ENCODE measurements at regions of chr7 and their contacts with region 1.

Region 1: DNA sequence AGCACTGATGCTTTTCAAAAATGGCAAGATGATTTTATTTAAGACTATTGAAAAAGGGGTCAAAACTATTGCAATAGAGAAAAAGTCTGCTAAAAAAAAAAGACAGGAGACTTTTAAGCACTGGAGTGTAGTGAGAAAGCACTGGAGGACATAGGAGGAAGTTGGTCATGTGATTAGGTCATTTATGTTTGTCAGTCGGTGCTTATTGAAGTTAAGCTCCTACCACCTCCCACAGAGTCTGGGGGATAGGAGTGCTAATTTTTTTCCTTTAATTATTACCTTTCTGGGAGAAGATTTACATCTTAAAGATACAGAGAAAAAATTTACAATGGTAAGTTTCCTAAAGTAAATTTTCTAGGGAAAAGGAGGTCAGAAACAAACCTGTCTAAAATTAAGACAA is 80.2 kb upstream of the TMEM229A start:
- DNase-seq: no peak
- ATAC-seq: no peak
- H3K4me3 ChIP-seq: no peak overlapping the region
- H3K27ac ChIP-seq: no peak overlapping the region
- H3K4me1 ChIP-seq: no peaks in the 10 kb centered on the region
- H3K27me3 ChIP-seq: no peaks in the 10 kb centered on the region
- CTCF ChIP-seq: no peak

Region 2: DNA sequence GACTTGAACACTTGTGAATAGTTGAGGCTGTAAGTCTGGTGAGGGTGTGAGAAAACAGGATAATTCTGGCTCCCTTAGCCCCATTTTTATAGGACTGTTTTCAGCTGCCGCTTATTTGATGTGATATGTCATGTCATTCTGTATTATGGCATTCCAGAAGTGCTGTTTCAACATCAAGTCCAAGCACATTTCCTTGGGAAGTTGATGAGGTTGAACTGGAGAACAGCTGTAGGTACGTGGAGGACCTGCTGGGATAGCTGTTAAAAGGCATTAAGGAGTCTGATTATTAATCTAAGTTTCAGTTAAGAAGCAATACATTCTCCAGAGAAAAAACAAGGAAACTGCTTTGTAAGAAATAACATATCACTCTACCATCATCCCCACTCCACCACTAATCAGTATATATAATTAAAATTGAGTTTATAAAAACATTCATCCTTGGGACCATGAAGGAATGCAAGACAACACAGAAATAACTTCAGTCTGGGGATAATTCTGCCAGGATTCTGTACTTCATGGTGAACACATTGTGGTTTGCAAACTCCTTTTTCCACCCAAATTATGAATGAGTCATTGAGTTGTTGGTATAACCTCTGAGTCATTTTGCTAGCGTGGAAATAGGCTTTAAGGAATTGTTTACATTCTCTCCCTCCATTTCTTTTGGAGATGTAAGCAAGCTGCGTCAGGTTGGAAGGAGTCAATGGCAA is 40.3 kb before region 1 on chr7:
- intact Hi-C with region 1: no loop called
- DNase-seq: no peak
- ATAC-seq: no peak
- H3K4me3 ChIP-seq: no peak overlapping the region
- H3K27ac ChIP-seq: no peak overlapping the region
- H3K4me1 ChIP-seq: no peaks in the 10 kb centered on the region
- H3K27me3 ChIP-seq: no peaks in the 10 kb centered on the region
- CTCF ChIP-seq: no peak

Region 3: GRCh38 chr7:124085179-124085578 is 27.9 kb before region 1 on chr7:
- intact Hi-C with region 1: no loop called
- DNase-seq: no peak
- ATAC-seq: no peak
- H3K4me3 ChIP-seq: no peak overlapping the region
- H3K27ac ChIP-seq: no peak overlapping the region
- H3K4me1 ChIP-seq: peaks cover 0 to 19% (median 7%) of the 10 kb centered on the region in 9 donors
- H3K27me3 ChIP-seq: no peaks in the 10 kb centered on the region
- CTCF ChIP-seq: no peak

Region 4: DNA sequence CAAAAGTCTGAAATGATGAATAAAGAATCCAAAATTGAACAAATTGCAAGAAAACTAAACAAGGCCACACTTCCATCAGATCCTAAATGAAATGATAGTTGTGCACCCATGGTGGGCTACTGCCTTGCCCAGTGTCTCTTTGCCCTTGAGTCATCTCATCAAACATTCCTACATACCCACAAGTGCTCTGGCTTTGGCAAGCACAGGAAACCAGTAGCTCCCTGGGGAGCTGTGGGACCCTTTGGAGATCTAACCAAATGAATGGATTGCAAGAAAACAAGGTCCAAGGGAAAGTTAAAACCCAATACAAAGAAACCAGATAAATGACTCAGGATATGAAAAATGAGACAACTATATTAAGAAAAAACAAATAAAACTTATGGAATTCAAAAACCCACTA is 49.6 kb after region 1 on chr7:
- intact Hi-C with region 1: loop called in 1 of 10 experiments (anchors 1 kb)
- DNase-seq: no peak
- ATAC-seq: no peak
- H3K4me3 ChIP-seq: no peak overlapping the region
- H3K27ac ChIP-seq: no peak overlapping the region
- H3K4me1 ChIP-seq: no peaks in the 10 kb centered on the region
- H3K27me3 ChIP-seq: no peaks in the 10 kb centered on the region
- CTCF ChIP-seq: no peak